Activated CD8-positive, alpha-beta memory T cell treated with anti-CD3 and anti-CD28 coated beads, Interleukin-2, amount 10 ng/mL, durations not matched to agents 7 days and 5 days (primary cell): ENCODE measurements at regions of chr6 and their contacts with region 1.

Region 1: GRCh38 chr6:27177485-27178406 is 69.8 kb upstream of the PRSS16 start:
- DNase-seq: peak; percentile 87
- ATAC-seq: peak; percentile 86
- H3K4me3 Mint-ChIP-seq: peak overlapping the region; percentile 91
- H3K27ac Mint-ChIP-seq: peak overlapping the region; percentile 88
- H3K4me1 Mint-ChIP-seq: peaks cover 11% of the 10 kb centered on the region
- H3K27me3 Mint-ChIP-seq: peaks cover 34% of the 10 kb centered on the region

Region 2: GRCh38 chr6:27188052-27188884 is 10.5 kb after region 1 on chr6:
- CTCF ChIA-PET with region 1: interaction called, 25 read pairs
- DNase-seq: peak; percentile 54
- ATAC-seq: peak; percentile 92
- H3K4me3 Mint-ChIP-seq: peak overlapping the region; percentile 95
- H3K27ac Mint-ChIP-seq: peak overlapping the region; percentile 83
- H3K4me1 Mint-ChIP-seq: peaks cover 17% of the 10 kb centered on the region
- H3K27me3 Mint-ChIP-seq: peaks cover 6% of the 10 kb centered on the region

Region 3: DNA sequence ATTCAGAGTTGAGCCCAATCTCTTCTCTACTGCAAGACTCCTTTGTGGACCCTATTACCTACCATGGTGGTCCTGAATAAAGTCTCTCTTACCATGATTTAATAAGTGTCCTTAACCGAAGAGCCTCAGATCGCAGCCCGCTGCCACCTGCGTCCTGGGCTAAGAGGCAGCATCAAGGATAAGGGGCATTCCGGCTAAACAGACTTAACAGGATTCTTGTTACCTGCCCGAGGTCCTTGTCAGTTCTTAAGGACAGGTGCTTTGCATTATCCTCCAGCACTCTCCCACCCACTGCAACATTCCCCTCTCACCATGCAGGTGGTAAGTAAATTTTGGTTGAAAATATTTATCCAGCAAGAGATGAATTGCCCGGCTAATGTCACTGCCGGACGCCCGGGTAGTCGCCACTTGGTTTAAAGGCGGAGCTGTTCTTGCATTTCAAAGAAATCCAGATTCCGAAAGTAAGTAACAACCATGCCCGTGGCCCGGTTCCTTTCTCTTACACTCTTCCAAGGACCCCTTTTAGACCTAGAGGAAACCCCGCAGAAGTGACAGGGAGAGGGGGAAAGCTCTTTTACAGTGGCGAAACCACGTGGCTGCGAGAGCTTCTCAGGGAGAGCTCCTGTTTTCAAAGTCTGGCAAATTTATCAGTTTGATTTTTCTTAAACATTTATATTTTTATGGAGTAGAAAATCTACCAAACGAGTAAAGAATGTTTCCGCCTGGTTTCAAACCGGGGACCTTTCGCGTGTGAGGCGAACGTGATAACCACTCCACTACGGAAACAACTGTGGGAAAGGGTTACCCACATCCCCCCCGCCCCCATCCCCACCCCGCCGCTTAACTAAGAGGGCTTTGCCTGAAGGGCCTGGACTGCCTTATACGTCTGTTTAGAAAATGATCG is 27.9 kb after region 1 on chr6:
- CTCF ChIA-PET with region 1: no interaction called
- DNase-seq: peak; percentile 72
- ATAC-seq: peak; percentile 63
- H3K4me3 Mint-ChIP-seq: peak overlapping the region; percentile 55
- H3K27ac Mint-ChIP-seq: peak overlapping the region; percentile 64
- H3K4me1 Mint-ChIP-seq: peaks cover 28% of the 10 kb centered on the region
- H3K27me3 Mint-ChIP-seq: peaks cover 52% of the 10 kb centered on the region